Breast epithelium (tissue), 4 donors: ENCODE measurements at regions of chr3 and their contacts with region 1.

Region 1: DNA sequence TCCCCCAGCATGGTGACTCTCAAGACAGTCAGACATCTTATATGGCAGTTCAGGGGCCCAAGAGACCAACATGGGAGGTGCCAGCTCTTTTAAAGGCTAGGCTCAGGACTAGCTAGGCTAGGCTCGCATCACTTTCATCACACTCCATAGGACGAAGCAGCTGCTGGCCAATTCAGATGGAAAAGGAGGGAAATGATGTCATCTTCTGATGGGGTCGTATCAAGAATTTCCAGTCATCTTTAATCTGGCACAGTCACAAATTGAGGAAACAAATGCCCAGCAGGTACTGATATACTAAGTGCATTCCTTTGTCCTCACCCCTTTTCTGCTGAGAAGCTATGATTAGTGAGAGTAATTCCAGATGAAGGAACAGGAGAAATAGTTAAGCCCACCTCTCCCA is 360.9 kb downstream of the CNTN3 start:
- DNase-seq: no peak
- H3K4me3 ChIP-seq: no peak overlapping the region
- H3K27ac ChIP-seq: no peak overlapping the region
- H3K4me1 ChIP-seq: no peaks in the 10 kb centered on the region
- H3K27me3 ChIP-seq: no peaks in the 10 kb centered on the region
- CTCF ChIP-seq: no peak
- POLR2A ChIP-seq: no peak

Region 2: GRCh38 chr3:74267588-74268184 is 14.1 kb after region 1 on chr3:
- intact Hi-C with region 1: loop called (anchors 1 kb)
- DNase-seq: no peak
- H3K4me3 ChIP-seq: no peak overlapping the region
- H3K27ac ChIP-seq: no peak overlapping the region
- H3K4me1 ChIP-seq: no peaks in the 10 kb centered on the region
- H3K27me3 ChIP-seq: no peaks in the 10 kb centered on the region
- CTCF ChIP-seq: peak; percentile 21 to 69 (median 69)
- POLR2A ChIP-seq: no peak